GM10248 (cell line): ENCODE measurements at regions of chr6 and their contacts with region 1.

Region 1: GRCh38 chr6:30907758-30908591 is at the start of gene GTF2H4:
- DNase-seq: peak; percentile 94
- CTCF ChIP-seq: no peak

Region 2: GRCh38 chr6:30870546-30870945 is 37.4 kb before region 1 on chr6:
- CTCF ChIA-PET with region 1: no interaction called
- POLR2A ChIA-PET with region 1: no interaction called
- DNase-seq: no peak
- CTCF ChIP-seq: no peak

Region 3: GRCh38 chr6:30895341-30895740 is 12.6 kb before region 1 on chr6:
- CTCF ChIA-PET with region 1: interaction called, 21 read pairs
- POLR2A ChIA-PET with region 1: no interaction called
- DNase-seq: no peak
- CTCF ChIP-seq: no peak

Region 4: GRCh38 chr6:30926644-30927043 is 18.7 kb after region 1 on chr6:
- CTCF ChIA-PET with region 1: no interaction called
- POLR2A ChIA-PET with region 1: no interaction called
- DNase-seq: no peak
- CTCF ChIP-seq: no peak

Region 5: GRCh38 chr6:30942338-30943060 is 34.5 kb after region 1 on chr6:
- CTCF ChIA-PET with region 1: no interaction called
- POLR2A ChIA-PET with region 1: no interaction called
- DNase-seq: no peak
- CTCF ChIP-seq: no peak

Region 6: DNA sequence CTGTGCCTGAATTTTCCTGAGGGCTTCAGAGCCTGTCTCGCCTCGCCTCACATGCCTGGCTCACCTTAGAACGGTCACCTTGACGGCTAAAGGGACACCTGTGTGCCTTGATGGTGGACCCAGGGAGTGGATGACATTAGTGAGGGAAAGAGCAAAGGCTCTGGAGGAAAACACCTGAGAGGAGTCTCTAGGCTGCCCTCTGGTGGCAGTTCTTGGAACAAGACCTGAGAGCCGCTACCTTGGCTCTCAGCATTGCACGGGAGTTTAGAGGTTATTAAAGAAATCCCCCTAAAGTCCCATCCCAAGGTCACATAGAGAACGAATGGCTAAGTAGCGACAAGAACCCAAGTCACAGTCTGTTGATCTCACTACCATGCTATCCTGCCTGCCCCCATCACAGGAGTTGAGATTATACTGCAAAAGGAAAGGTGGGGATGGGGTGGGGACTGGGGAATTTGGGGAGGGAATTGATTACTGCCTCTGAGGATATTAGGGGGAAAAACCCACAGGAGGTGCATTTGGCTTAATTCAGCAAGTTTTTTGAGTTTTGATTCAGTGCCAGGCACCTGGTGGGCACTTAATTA is 220.2 kb after region 1 on chr6:
- CTCF ChIA-PET with region 1: no interaction called
- POLR2A ChIA-PET with region 1: no interaction called
- DNase-seq: peak; percentile 81
- CTCF ChIP-seq: peak; percentile 76